HEK293 (cell line): ENCODE measurements at regions of chr6 and their contacts with region 1.

Region 1: GRCh38 chr6:70166088-70166958 is 136.6 kb downstream of the COL9A1 start:
- H3K4me3 ChIP-seq: peak overlapping the region; percentile 25
- H3K27ac ChIP-seq: no peak overlapping the region
- H3K4me1 ChIP-seq: no peaks in the 10 kb centered on the region
- CTCF ChIP-seq: peak; percentile 75; the same call in 1 of the 2 replicates

Region 2: GRCh38 chr6:70051197-70052124 is 114.9 kb before region 1 on chr6:
- CTCF ChIA-PET with region 1: no interaction called
- POLR2A ChIA-PET with region 1: no interaction called
- H3K4me3 ChIP-seq: no peak overlapping the region
- H3K27ac ChIP-seq: no peak overlapping the region
- H3K4me1 ChIP-seq: no peaks in the 10 kb centered on the region
- CTCF ChIP-seq: no peak

Region 3: DNA sequence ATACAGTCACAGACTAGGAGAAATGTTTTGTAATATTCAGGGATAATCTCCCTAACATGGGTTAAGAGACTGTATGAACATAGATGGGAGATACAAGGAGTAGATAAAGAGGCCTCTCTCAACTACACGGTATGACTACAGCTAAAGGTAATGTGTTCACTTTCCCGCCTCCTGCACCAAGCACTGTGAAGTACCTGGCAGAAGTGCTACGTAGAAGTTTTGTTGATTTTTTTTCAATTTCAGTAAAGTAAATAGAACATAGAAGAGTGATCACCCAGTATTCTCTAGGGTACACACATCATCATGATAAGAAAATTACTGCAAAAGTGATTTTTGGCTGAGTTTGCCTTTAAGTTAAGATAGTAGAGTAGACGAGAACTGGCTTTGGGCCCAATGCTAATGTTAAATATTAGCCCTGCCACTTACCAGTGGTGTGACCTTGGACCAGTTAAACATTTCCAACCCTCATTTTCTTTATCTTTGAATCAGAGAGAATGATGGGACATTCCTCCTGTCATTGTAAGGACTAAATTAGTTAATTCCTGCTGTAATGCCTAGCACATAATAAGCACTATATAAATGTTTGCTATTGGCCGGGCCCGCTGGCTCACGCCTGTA is 47.0 kb before region 1 on chr6:
- CTCF ChIA-PET with region 1: interaction called, 15 read pairs
- POLR2A ChIA-PET with region 1: no interaction called
- H3K4me3 ChIP-seq: no peak overlapping the region
- H3K27ac ChIP-seq: no peak overlapping the region
- H3K4me1 ChIP-seq: no peaks in the 10 kb centered on the region
- CTCF ChIP-seq: no peak

Region 4: GRCh38 chr6:70133246-70133645 is 33.1 kb before region 1 on chr6:
- CTCF ChIA-PET with region 1: interaction called, 12 read pairs
- POLR2A ChIA-PET with region 1: no interaction called
- H3K4me3 ChIP-seq: no peak overlapping the region
- H3K27ac ChIP-seq: no peak overlapping the region
- H3K4me1 ChIP-seq: no peaks in the 10 kb centered on the region
- CTCF ChIP-seq: no peak

Region 5: DNA sequence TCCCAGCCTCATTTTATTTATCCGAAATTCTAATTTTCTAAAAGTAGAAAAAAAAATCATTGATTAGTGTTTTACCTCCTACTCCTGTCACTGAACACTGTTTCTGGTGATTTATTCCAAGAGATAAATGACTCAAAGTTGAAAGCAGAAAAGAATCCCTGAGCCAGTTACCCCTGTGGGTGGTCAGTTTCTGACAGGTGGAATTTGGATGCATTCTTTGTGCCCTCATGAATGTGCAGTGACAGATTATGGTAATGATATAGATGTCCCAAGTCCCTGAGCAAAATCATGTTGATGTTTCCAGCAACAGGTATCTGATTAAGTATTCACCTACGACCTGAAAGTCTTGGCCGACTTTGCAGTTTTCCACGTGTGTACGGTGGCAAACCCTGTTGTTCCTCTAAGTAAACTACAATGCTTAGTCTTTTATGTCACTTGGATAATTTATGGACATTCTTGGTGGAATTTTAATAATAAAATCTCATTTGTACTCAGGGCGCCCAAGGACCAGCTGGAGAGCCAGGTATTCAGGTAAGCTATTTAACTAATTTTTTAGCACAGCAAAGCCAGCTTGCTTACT is 17.0 kb before region 1 on chr6:
- CTCF ChIA-PET with region 1: interaction called, 27 read pairs
- POLR2A ChIA-PET with region 1: no interaction called
- H3K4me3 ChIP-seq: no peak overlapping the region
- H3K27ac ChIP-seq: no peak overlapping the region
- H3K4me1 ChIP-seq: peaks cover 4% of the 10 kb centered on the region; the same call in 1 of the 2 replicates
- CTCF ChIP-seq: no peak

Region 6: GRCh38 chr6:70176842-70177550 is 10.7 kb after region 1 on chr6:
- CTCF ChIA-PET with region 1: interaction called, 16 read pairs
- POLR2A ChIA-PET with region 1: no interaction called
- H3K4me3 ChIP-seq: no peak overlapping the region
- H3K27ac ChIP-seq: no peak overlapping the region
- H3K4me1 ChIP-seq: peaks cover 7% of the 10 kb centered on the region; the same call in 1 of the 2 replicates
- CTCF ChIP-seq: no peak